ENCODE measurements at regions of chr5 and their contacts with region 1.

Region 1: DNA sequence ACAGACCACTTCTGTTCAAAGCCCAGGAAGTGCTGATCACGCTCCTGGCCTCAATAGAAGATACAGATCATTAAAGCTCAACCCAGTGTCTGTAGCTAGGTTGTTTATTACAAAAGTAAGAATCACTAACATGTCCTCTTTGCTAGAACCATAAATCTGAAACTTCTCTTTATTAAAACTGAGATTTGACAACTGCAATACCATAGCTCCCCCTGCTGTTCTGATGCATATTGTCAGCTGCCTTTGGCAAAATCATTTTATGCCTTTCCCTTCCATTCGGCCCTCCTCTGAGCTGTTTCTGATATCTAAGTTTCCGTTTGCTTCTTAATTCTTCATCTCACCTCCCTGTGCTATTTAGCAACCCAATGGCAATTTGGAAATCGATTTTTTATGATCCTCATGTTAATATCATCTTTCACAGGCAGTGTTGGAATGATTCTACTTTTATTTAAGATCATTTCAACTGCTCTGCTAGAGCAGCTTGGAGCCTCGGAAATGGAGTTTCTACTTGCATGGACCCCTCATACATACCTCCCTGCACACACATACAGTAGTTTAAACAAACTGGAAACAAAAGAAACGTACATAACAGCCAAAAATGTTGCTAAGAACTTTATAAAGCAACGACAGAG is 998.8 kb downstream of the MAT2B start:
- DNase-seq: peak; percentile 43 to 78 (median 68)
- H3K4me3 ChIP-seq: no peak overlapping the region
- H3K27ac ChIP-seq: no peak overlapping the region
- H3K4me1 ChIP-seq: no peaks in the 10 kb centered on the region
- H3K27me3 ChIP-seq: no peaks in the 10 kb centered on the region

Region 2: DNA sequence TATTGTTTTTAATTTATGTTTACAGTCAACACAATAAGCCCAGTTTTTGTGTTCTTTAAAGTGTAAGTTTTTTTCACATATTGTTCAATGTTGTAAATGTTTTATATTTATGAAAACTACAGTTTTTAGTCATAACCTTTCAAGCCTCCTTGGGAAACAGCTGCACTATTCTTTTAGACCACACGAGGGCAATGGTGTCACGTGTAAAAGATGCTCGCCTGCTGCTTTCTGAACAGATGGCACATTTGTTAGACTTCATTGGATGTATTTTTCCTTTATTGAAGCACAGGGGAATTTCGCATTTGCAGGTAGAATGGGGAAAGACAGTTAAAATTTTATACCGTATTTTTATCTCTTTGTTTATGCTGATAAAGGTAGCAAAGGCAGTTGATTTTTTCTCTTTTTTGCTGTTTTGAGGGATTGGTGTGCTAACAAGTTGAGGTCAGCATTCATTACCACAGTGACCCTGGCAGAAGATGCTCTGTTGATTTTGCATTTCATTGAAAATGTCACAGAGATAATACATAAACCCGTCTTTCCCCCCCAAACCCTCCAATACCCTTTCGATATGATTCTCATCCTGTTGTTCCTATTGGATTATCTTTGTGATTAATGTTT is 939.8 kb before region 1 on chr5:
- CTCF ChIA-PET with region 1: interaction called, 16 read pairs
- POLR2A ChIA-PET with region 1: no interaction called
- DNase-seq: peak; percentile 52 to 76 (median 70)
- H3K4me3 ChIP-seq: no peak overlapping the region
- H3K27ac ChIP-seq: no peak overlapping the region
- H3K4me1 ChIP-seq: peaks cover 4 to 12% (median 9%) of the 10 kb centered on the region in 4 experiments
- H3K27me3 ChIP-seq: peaks cover 10 to 38% (median 32%) of the 10 kb centered on the region in 5 experiments

Region 3: DNA sequence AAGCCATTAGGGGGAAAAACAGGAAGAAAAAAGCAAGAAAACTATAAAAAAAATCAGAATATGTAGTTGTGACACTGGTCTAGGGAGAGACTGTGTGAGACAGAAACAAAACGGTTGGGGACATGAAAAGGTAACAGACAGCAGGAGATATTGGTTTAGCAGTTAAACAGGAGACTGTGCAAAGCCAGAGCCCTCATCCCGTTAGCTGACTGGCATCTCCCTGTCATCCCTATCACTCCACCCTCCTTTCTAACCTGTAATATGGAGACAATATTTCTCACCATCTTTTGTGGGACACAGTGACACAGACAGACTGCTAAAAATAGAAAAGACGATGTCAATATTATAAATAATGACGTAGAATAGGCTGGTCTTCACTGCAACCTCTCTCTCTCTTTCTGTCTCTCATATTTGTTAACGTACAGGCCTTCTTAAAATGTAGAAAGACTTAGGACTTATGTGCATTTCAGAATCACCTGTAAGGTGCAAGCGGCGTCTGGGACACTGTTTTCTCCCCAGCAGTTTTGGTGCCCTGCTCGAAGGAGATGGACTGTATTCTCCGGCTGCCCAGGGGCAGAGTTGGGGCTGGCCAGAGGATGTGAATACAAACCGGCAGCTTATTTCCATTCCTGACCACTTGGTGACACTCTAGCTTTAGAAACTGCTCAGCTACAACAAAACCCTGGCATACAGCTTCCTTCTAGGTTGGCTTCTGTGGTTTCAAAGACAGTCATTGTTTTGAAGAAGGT is 808.3 kb before region 1 on chr5:
- CTCF ChIA-PET with region 1: interaction called, 24 read pairs
- POLR2A ChIA-PET with region 1: no interaction called
- DNase-seq: peak; percentile 56 to 79 (median 75)
- H3K4me3 ChIP-seq: no peak overlapping the region
- H3K27ac ChIP-seq: no peak overlapping the region
- H3K4me1 ChIP-seq: no peaks in the 10 kb centered on the region
- H3K27me3 ChIP-seq: no peaks in the 10 kb centered on the region

Region 4: GRCh38 chr5:164013077-164013670 is 491.1 kb before region 1 on chr5:
- CTCF ChIA-PET with region 1: interaction called, 13 read pairs
- POLR2A ChIA-PET with region 1: no interaction called
- DNase-seq: peak; percentile 67 to 89 (median 80)
- H3K4me3 ChIP-seq: no peak overlapping the region
- H3K27ac ChIP-seq: no peak overlapping the region
- H3K4me1 ChIP-seq: no peaks in the 10 kb centered on the region
- H3K27me3 ChIP-seq: peaks cover 0 to under 1% (median 0%) of the 10 kb centered on the region in 5 experiments

Measured in common myeloid progenitor, CD34-positive (primary cell).